ENCODE measurements at regions of chr9 and their contacts with region 1.

Region 1: DNA sequence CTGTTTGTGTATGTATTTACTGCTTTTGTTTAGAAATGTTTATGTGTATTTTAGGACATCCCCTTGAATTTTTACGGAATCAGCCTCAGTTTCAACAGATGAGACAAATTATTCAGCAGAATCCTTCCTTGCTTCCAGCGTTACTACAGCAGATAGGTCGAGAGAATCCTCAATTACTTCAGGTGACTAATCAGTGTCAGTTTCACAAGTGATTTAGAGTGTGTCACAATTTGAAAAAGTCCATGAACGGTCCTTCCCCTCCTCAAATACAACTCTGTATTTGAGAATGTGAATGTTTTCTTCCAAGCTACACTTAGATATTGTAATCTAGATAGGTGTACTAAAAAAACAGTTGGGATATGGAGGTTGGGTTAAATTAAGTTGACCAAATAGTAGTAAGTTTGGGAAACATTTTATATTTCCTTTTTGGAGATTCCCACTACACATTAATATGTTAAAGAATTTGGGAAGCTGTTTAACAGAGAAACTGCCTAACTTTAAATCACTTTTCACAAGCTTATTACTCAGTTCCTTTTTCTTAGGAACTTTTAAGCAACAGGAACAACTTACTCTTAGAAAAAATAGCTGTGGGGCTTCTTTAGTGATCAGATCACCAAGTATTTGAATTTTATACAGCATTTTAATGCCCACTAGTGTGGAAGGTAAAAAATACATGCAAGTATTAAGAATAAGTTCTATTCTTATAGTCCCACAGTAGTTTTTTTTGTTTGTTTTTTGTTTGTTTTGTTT is 40.9 kb downstream of the RAD23B start:
- H3K4me3 Mint-ChIP-seq: peak overlapping the region; percentile 45
- H3K27ac Mint-ChIP-seq: peak overlapping the region; percentile 87
- H3K4me1 Mint-ChIP-seq: peaks cover 55% of the 10 kb centered on the region
- H3K27me3 Mint-ChIP-seq: no peaks in the 10 kb centered on the region

Region 2: DNA sequence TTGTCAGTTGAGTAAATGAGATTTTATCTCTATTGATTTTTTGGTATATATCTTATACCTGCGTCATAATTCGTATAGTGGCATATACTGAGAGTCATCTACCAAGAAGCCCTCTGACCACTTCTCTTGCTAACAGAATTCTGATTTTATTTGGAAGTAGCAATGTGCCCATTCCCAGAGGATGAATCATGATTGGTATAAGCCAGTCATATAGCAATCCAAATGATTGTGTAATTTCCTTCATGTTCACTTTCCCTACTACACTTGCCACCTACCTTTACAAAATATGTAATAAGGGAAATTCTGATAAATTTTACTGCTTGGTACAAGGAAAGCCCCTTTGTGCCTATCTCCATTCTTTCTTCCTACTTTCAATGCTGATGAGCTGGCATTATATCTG is 477.2 kb before region 1 on chr9:
- intact Hi-C with region 1: no loop called
- H3K4me3 Mint-ChIP-seq: no peak overlapping the region
- H3K27ac Mint-ChIP-seq: no peak overlapping the region
- H3K4me1 Mint-ChIP-seq: no peaks in the 10 kb centered on the region
- H3K27me3 Mint-ChIP-seq: peaks cover under 1% of the 10 kb centered on the region

Region 3: GRCh38 chr9:107282753-107283625 is 41.0 kb before region 1 on chr9 and contains the start of gene RAD23B:
- intact Hi-C with region 1: loop called (anchors 5 kb)
- H3K4me3 Mint-ChIP-seq: peak within 1 kb of the TSS; percentile 97
- H3K27ac Mint-ChIP-seq: peak within 1 kb of the TSS; percentile 94
- H3K4me1 Mint-ChIP-seq: peaks cover 35% of the 10 kb centered on the region
- H3K27me3 Mint-ChIP-seq: no peaks in the 10 kb centered on the region

Region 4: GRCh38 chr9:107337676-107338590 is 13.9 kb after region 1 on chr9:
- intact Hi-C with region 1: loop called (anchors 2 kb)
- H3K4me3 Mint-ChIP-seq: peak overlapping the region; percentile 55
- H3K27ac Mint-ChIP-seq: peak overlapping the region; percentile 89
- H3K4me1 Mint-ChIP-seq: peaks cover 74% of the 10 kb centered on the region
- H3K27me3 Mint-ChIP-seq: no peaks in the 10 kb centered on the region

Measured in dendritic cell treated with granulocyte-macrophage colony-stimulating factor and Interleukin-4, amounts not matched to agents 40 ng/mL and 50 ng/mL, for 4 days (primary cell).